ENCODE measurements at regions of chr1 and their contacts with region 1.

Region 1: GRCh38 chr1:60960891-60961461 is 121.4 kb upstream of the NFIA start:
- DNase-seq: peak; percentile 96
- H3K4me3 ChIP-seq: no peak overlapping the region
- H3K27ac ChIP-seq: peak overlapping the region; percentile 98
- H3K4me1 ChIP-seq: peaks cover 68% of the 10 kb centered on the region
- H3K27me3 ChIP-seq: no peaks in the 10 kb centered on the region
- CTCF ChIP-seq: no peak
- POLR2A ChIP-seq: no peak

Region 2: GRCh38 chr1:60470246-60470645 is 490.7 kb before region 1 on chr1:
- CTCF ChIA-PET with region 1: no interaction called
- POLR2A ChIA-PET with region 1: no interaction called
- dilution Hi-C with region 1: no loop called
- intact Hi-C with region 1: loop called (anchors 1 kb)
- DNase-seq: peak; percentile 66
- H3K4me3 ChIP-seq: no peak overlapping the region
- H3K27ac ChIP-seq: peak overlapping the region; percentile 82
- H3K4me1 ChIP-seq: peaks cover 27% of the 10 kb centered on the region
- H3K27me3 ChIP-seq: no peaks in the 10 kb centered on the region
- CTCF ChIP-seq: no peak
- POLR2A ChIP-seq: no peak

Region 3: DNA sequence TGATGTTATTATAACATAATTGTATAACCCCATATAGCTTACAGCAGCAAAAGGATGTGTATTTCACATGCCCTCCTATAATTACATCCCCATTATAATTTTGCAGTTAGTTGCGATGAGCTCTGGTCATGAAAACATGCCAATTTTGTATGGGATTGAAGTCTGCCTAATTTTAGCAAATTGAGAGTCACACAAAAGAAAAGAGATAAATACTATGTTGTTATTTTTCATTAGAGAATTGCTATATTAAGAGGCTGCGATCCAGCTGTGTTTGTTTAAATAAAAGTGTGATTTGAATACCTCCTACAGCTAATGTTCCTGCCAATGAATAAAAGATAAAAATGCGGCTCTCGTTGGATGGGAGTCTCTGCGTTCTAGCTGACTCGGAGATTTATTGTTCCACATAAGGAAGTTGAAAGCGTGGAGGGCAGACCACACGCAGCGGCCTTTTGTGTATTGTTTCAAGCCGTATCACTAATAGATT is 339.6 kb before region 1 on chr1:
- CTCF ChIA-PET with region 1: interaction called, 3 read pairs
- POLR2A ChIA-PET with region 1: no interaction called
- dilution Hi-C with region 1: no loop called
- intact Hi-C with region 1: loop called (anchors 2 kb)
- DNase-seq: peak; percentile 90
- H3K4me3 ChIP-seq: no peak overlapping the region
- H3K27ac ChIP-seq: peak overlapping the region; percentile 46
- H3K4me1 ChIP-seq: peaks cover 29% of the 10 kb centered on the region
- H3K27me3 ChIP-seq: no peaks in the 10 kb centered on the region
- CTCF ChIP-seq: no peak
- POLR2A ChIP-seq: no peak

Region 4: GRCh38 chr1:60857851-60858250 is 103.1 kb before region 1 on chr1:
- CTCF ChIA-PET with region 1: interaction called, 11 read pairs
- POLR2A ChIA-PET with region 1: no interaction called
- dilution Hi-C with region 1: no loop called
- intact Hi-C with region 1: no loop called
- DNase-seq: no peak
- H3K4me3 ChIP-seq: no peak overlapping the region
- H3K27ac ChIP-seq: no peak overlapping the region
- H3K4me1 ChIP-seq: peaks cover under 1% of the 10 kb centered on the region
- H3K27me3 ChIP-seq: no peaks in the 10 kb centered on the region
- CTCF ChIP-seq: no peak
- POLR2A ChIP-seq: no peak

Region 5: GRCh38 chr1:60911966-60912697 is 48.8 kb before region 1 on chr1:
- CTCF ChIA-PET with region 1: interaction called, 5 read pairs
- POLR2A ChIA-PET with region 1: no interaction called
- dilution Hi-C with region 1: no loop called
- intact Hi-C with region 1: loop called (anchors 1 kb)
- DNase-seq: peak; percentile 62
- H3K4me3 ChIP-seq: no peak overlapping the region
- H3K27ac ChIP-seq: peak overlapping the region; percentile 27
- H3K4me1 ChIP-seq: peaks cover 13% of the 10 kb centered on the region
- H3K27me3 ChIP-seq: no peaks in the 10 kb centered on the region
- CTCF ChIP-seq: no peak
- POLR2A ChIP-seq: no peak

Region 6: GRCh38 chr1:61287734-61288133 is 326.8 kb after region 1 on chr1:
- CTCF ChIA-PET with region 1: no interaction called
- POLR2A ChIA-PET with region 1: no interaction called
- dilution Hi-C with region 1: no loop called
- intact Hi-C with region 1: loop called (anchors 5 kb)
- DNase-seq: peak; percentile 90
- H3K4me3 ChIP-seq: no peak overlapping the region
- H3K27ac ChIP-seq: peak overlapping the region; percentile 87
- H3K4me1 ChIP-seq: peaks cover 29% of the 10 kb centered on the region
- H3K27me3 ChIP-seq: no peaks in the 10 kb centered on the region
- CTCF ChIP-seq: no peak
- POLR2A ChIP-seq: no peak

Measured in endothelial cell of umbilical vein (primary cell).